HepG2 (cell line): ENCODE measurements at regions of chr2 and their contacts with region 1.

Region 1: DNA sequence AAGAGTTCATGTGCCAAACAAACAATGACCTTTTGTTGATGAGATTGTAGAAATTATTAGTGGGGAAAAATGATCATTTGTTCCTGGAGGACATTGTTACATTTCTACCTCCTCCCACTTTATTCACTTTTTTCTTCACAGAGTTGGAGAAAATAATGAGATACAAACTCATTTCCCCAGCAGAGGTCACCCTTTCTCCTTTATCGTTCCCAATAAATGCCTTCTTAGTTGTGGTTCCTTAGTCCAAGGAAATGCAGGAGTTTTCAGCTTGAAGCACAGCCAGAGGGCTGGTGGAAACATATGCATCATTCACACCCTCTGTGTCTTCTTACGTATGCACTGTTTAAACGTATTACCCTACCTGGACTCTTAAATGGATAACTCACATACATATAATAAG is 108.8 kb downstream of the SLC4A3 start:
- DNase-seq: peak; percentile 51
- ATAC-seq: peak; percentile 63; the same call in 2 of the 3 replicates
- H3K4me3 ChIP-seq: no peak overlapping the region
- H3K27ac ChIP-seq: no peak overlapping the region
- H3K4me1 ChIP-seq: no peaks in the 10 kb centered on the region
- H3K27me3 ChIP-seq: peaks cover 0 to 26% of the 10 kb centered on the region in 2 experiments; a peak in 4 of 5 replicates
- CTCF ChIP-seq: peak; percentile 74
- EP300 ChIP-seq: no peak
- POLR2A ChIP-seq: no peak
- RAD21 ChIP-seq: peak; percentile 41; the same call in 1 of the 2 replicates

Region 2: DNA sequence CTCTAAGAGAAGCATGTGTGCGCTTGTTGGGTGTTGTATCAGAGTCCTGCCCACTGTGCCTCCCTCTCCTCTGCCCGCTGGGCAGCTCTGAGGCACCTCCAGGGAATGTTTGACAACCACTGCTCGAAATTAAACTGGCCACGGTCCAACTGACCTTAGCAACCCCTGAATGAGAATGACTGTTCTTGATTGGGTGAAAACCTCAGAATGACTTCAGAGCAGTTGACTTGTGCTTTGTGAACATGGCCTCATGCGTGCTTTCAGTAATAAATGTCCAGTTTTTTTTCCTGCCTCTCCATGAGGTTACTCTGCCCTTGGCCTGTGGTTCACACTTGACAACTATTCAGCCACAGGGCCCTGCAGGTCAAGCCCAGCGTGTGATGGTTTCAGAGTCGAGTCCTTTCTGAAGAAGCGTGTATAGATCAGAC is 13.8 kb before region 1 on chr2:
- CTCF ChIA-PET with region 1: no interaction called
- POLR2A ChIA-PET with region 1: no interaction called
- in situ Hi-C with region 1: no loop called
- intact Hi-C with region 1: no loop called
- DNase-seq: peak; percentile 60
- ATAC-seq: peak; percentile 69
- H3K4me3 ChIP-seq: no peak overlapping the region
- H3K27ac ChIP-seq: no peak overlapping the region
- H3K4me1 ChIP-seq: peaks cover 8% of the 10 kb centered on the region
- H3K27me3 ChIP-seq: peaks cover 0 to 9% of the 10 kb centered on the region in 2 experiments; a peak in 2 of 5 replicates
- CTCF ChIP-seq: no peak
- EP300 ChIP-seq: no peak
- POLR2A ChIP-seq: no peak
- RAD21 ChIP-seq: no peak

Region 3: GRCh38 chr2:219836647-219837177 is 100.5 kb after region 1 on chr2:
- CTCF ChIA-PET with region 1: interaction called, 9 read pairs
- POLR2A ChIA-PET with region 1: no interaction called
- in situ Hi-C with region 1: loop called (anchors 5 kb)
- intact Hi-C with region 1: loop called (anchors 1 kb)
- DNase-seq: peak; percentile 60
- ATAC-seq: peak; percentile 80
- H3K4me3 ChIP-seq: no peak overlapping the region
- H3K27ac ChIP-seq: no peak overlapping the region
- H3K4me1 ChIP-seq: no peaks in the 10 kb centered on the region
- H3K27me3 ChIP-seq: peaks cover 0 to 1% of the 10 kb centered on the region in 2 experiments; a peak in 2 of 5 replicates
- CTCF ChIP-seq: peak; percentile 60
- EP300 ChIP-seq: no peak
- POLR2A ChIP-seq: no peak
- RAD21 ChIP-seq: no peak

Region 4: DNA sequence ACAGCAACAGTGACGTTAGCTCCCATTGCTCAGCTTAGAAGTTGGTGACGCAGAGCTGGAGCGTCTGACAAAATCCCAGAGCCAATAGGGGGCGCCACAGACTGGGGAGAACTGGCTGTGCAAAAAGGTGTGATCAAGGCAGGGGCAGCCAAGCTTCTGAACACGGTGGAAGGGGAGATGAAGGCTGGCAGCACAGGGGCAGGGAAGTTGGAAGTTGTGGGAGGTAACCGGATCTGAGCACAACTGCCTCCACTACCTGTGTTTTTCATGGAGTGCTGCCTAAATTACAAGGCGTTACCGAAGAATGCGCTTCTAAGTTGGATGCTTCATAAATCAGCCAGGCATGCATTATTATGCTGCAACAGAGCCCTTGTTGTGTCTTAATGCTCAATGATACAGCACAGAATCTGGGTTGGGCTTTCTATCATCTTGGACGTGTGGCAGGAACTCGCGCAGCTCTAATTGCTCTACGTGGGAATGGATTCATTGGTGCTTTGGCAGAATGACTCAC is 261.2 kb after region 1 on chr2:
- CTCF ChIA-PET with region 1: interaction called, 9 read pairs
- POLR2A ChIA-PET with region 1: no interaction called
- in situ Hi-C with region 1: loop called (anchors 5 kb)
- intact Hi-C with region 1: loop called (anchors 1 kb)
- DNase-seq: no peak
- ATAC-seq: no peak
- H3K4me3 ChIP-seq: no peak overlapping the region
- H3K27ac ChIP-seq: no peak overlapping the region
- H3K4me1 ChIP-seq: no peaks in the 10 kb centered on the region
- H3K27me3 ChIP-seq: peaks cover 0 to 29% of the 10 kb centered on the region in 2 experiments; a peak in 2 of 5 replicates
- CTCF ChIP-seq: peak; percentile 49
- EP300 ChIP-seq: no peak
- POLR2A ChIP-seq: no peak
- RAD21 ChIP-seq: no peak

Region 5: DNA sequence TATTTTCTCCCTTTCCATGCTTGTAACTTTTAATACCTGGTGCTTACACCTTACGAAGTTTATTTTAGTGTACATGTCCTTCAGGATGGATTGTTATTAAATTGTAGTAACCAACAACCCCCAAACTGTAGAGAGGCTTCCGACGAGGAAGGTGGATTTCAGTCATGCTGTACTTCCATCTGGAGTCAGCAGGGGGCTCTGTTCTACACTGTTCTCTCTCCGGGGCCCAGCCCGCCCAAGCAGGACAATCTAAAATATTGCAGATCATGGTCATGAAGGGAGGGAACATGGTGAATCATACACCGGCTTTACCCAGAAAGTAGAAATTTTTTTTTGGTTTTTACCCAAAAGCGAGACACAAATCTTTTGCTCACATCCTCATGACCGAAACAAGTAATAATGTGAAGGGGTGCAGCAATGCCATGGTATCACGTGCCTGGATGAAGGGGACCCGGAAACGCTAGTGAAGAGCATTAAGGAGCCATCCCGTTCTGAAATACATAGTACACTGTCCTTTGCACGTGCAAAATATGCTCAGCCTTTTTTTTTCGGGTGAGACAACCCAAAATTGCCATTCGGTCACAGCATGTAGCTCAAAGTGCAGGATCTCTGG is 951.1 kb after region 1 on chr2:
- CTCF ChIA-PET with region 1: no interaction called
- POLR2A ChIA-PET with region 1: no interaction called
- in situ Hi-C with region 1: no loop called
- intact Hi-C with region 1: loop called (anchors 5 kb)
- DNase-seq: peak; percentile 39
- ATAC-seq: peak; percentile 94
- H3K4me3 ChIP-seq: no peak overlapping the region
- H3K27ac ChIP-seq: no peak overlapping the region
- H3K4me1 ChIP-seq: no peaks in the 10 kb centered on the region
- H3K27me3 ChIP-seq: no peaks in the 10 kb centered on the region
- CTCF ChIP-seq: peak; percentile 84
- EP300 ChIP-seq: no peak
- POLR2A ChIP-seq: no peak
- RAD21 ChIP-seq: peak; percentile 46; the same call in 1 of the 2 replicates

Region 6: GRCh38 chr2:221573430-221574230 is 1837.4 kb after region 1 on chr2:
- CTCF ChIA-PET with region 1: interaction called, 13 read pairs
- POLR2A ChIA-PET with region 1: no interaction called
- in situ Hi-C with region 1: loop called (anchors 5 kb)
- intact Hi-C with region 1: loop called (anchors 1 kb)
- DNase-seq: peak; percentile 36
- ATAC-seq: peak; percentile 97
- H3K4me3 ChIP-seq: peak overlapping the region; percentile 2 to 68 (median 37); a peak in 3 of 6 replicates
- H3K27ac ChIP-seq: no peak overlapping the region
- H3K4me1 ChIP-seq: peaks cover 7% of the 10 kb centered on the region
- H3K27me3 ChIP-seq: peaks cover 4 to 45% of the 10 kb centered on the region in 2 experiments; a peak in 4 of 5 replicates
- CTCF ChIP-seq: peak; percentile 100
- EP300 ChIP-seq: no peak
- POLR2A ChIP-seq: no peak
- RAD21 ChIP-seq: peak; percentile 98